Common myeloid progenitor, CD34-positive (primary cell): ENCODE measurements at regions of chr2 and their contacts with region 1.

Region 1: GRCh38 chr2:200021449-200022114 is 66.2 kb downstream of the MAIP1 start:
- DNase-seq: no peak
- H3K4me3 ChIP-seq: no peak overlapping the region
- H3K27ac ChIP-seq: no peak overlapping the region
- H3K4me1 ChIP-seq: no peaks in the 10 kb centered on the region
- H3K27me3 ChIP-seq: no peaks in the 10 kb centered on the region

Region 2: GRCh38 chr2:200003444-200003843 is 18.1 kb before region 1 on chr2:
- CTCF ChIA-PET with region 1: no interaction called
- POLR2A ChIA-PET with region 1: interaction called, 12 read pairs
- DNase-seq: no peak
- H3K4me3 ChIP-seq: no peak overlapping the region
- H3K27ac ChIP-seq: no peak overlapping the region
- H3K4me1 ChIP-seq: no peaks in the 10 kb centered on the region
- H3K27me3 ChIP-seq: no peaks in the 10 kb centered on the region

Region 3: GRCh38 chr2:200054681-200055468 is 33.3 kb after region 1 on chr2:
- CTCF ChIA-PET with region 1: no interaction called
- POLR2A ChIA-PET with region 1: no interaction called
- DNase-seq: no peak
- H3K4me3 ChIP-seq: no peak overlapping the region
- H3K27ac ChIP-seq: no peak overlapping the region
- H3K4me1 ChIP-seq: peaks cover 0 to 3% (median 0%) of the 10 kb centered on the region in 4 experiments
- H3K27me3 ChIP-seq: no peaks in the 10 kb centered on the region